A549 (cell line): ENCODE measurements at regions of chr4 and their contacts with region 1.

Region 1: GRCh38 chr4:114386637-114387233 is 211.9 kb upstream of the UGT8 start:
- DNase-seq: peak in 1 of 2 experiments; percentile 22
- ATAC-seq: peak in 1 of 2 experiments; percentile 43; a peak in 1 of 6 replicates
- H3K4me3 ChIP-seq: no peak overlapping the region
- H3K27ac ChIP-seq: no peak overlapping the region
- H3K4me1 ChIP-seq: no peaks in the 10 kb centered on the region
- CTCF ChIP-seq: peak; percentile 77
- EP300 ChIP-seq: no peak
- POLR2A ChIP-seq: no peak
- RAD21 ChIP-seq: peak; percentile 79

Region 2: GRCh38 chr4:113394730-113395530 is 991.8 kb before region 1 on chr4:
- CTCF ChIA-PET with region 1: interaction called, 10 read pairs
- POLR2A ChIA-PET with region 1: no interaction called
- DNase-seq: peak; percentile 24 to 78
- ATAC-seq: peak; percentile 98 to 100
- H3K4me3 ChIP-seq: no peak overlapping the region
- H3K27ac ChIP-seq: peak overlapping the region in 1 of 2 experiments; percentile 68; a peak in 4 of 6 replicates
- H3K4me1 ChIP-seq: no peaks in the 10 kb centered on the region
- CTCF ChIP-seq: peak; percentile 77
- EP300 ChIP-seq: no peak
- POLR2A ChIP-seq: no peak
- RAD21 ChIP-seq: peak; percentile 85 to 87

Region 3: DNA sequence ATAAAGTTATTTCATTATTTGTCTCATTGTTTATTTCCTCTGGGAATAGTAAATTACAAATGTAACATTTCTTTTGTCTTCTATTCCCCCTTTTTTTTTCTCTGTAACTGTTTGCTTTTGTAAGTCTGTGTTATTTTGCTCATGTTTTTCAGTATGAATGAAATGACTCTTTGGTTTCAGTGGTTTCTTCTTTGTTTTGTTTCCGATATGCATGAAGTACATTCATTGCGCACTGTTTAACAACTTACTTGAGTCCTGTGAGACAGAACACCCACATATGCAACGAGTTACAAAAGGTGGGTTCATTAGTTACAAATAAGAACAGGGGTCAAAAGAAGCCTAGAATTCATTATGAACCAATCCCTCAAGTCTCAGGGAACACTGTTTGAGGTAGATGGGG is 36.8 kb after region 1 on chr4:
- CTCF ChIA-PET with region 1: no interaction called
- POLR2A ChIA-PET with region 1: no interaction called
- DNase-seq: no peak
- ATAC-seq: no peak
- H3K4me3 ChIP-seq: no peak overlapping the region
- H3K27ac ChIP-seq: no peak overlapping the region
- H3K4me1 ChIP-seq: no peaks in the 10 kb centered on the region
- CTCF ChIP-seq: no peak
- EP300 ChIP-seq: no peak
- POLR2A ChIP-seq: no peak
- RAD21 ChIP-seq: no peak

Region 4: GRCh38 chr4:114659386-114660008 is 272.8 kb after region 1 on chr4:
- CTCF ChIA-PET with region 1: interaction called, 11 read pairs
- POLR2A ChIA-PET with region 1: no interaction called
- DNase-seq: peak; percentile 17 to 66
- ATAC-seq: peak; percentile 94 to 95
- H3K4me3 ChIP-seq: no peak overlapping the region
- H3K27ac ChIP-seq: no peak overlapping the region
- H3K4me1 ChIP-seq: no peaks in the 10 kb centered on the region
- CTCF ChIP-seq: peak; percentile 60
- EP300 ChIP-seq: no peak
- POLR2A ChIP-seq: no peak
- RAD21 ChIP-seq: peak; percentile 53 to 71

Region 5: DNA sequence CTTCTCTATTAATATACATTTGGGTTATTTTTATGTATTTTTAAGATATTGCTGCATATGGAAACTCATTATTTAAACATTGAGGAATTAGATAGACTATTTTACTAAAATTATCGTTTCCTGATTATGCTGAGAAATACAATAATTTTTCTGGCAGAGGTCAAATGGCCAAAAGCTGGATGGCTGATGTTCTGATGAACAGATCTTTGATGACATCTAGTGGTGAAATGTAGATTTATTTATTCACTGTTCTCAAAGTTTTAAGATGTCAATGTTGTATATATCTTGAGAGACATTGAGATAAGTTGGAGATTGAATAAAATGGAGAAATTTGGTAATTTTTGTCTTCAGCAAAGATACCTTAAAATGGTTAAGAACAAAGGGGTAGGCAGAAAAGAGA is 308.0 kb after region 1 on chr4:
- CTCF ChIA-PET with region 1: interaction called, 13 read pairs
- POLR2A ChIA-PET with region 1: no interaction called
- DNase-seq: peak in 1 of 2 experiments; percentile 25
- ATAC-seq: no peak
- H3K4me3 ChIP-seq: no peak overlapping the region
- H3K27ac ChIP-seq: no peak overlapping the region
- H3K4me1 ChIP-seq: no peaks in the 10 kb centered on the region
- CTCF ChIP-seq: peak; percentile 69
- EP300 ChIP-seq: no peak
- POLR2A ChIP-seq: no peak
- RAD21 ChIP-seq: peak; percentile 64 to 74